ENCODE measurements at regions of chr4 and their contacts with region 1.

Region 1: DNA sequence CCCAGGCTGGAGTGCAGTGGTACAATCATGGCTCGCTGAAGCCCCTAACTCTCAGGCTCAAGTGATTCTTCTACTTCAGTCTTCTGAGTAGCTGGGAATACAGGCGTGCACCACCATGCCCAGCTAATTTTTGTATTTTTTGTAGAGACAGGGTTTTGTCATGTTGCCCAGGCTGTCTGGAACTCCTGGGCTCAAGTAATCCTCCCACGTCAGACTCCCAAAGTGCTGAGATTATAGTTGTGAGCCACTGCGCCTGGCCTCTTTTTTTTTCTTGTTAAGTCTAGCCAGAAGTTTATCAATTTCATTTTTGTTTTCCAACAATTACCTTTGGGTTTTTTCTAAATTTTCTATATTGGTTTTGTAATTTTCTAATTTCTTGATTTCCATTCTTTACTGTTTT is 100.6 kb downstream of the GC start:
- DNase-seq: no peak
- ATAC-seq: no peak
- H3K4me3 ChIP-seq: no peak overlapping the region
- H3K27ac ChIP-seq: peak overlapping the region in 1 of 12 donors; percentile 17
- H3K4me1 ChIP-seq: no peaks in the 10 kb centered on the region
- H3K27me3 ChIP-seq: no peaks in the 10 kb centered on the region
- CTCF ChIP-seq: no peak
- POLR2A ChIP-seq: no peak

Region 2: GRCh38 chr4:71663780-71664179 is 19.5 kb before region 1 on chr4:
- intact Hi-C with region 1: loop called in 1 of 10 experiments (anchors 1 kb)
- DNase-seq: no peak
- ATAC-seq: no peak
- H3K4me3 ChIP-seq: no peak overlapping the region
- H3K27ac ChIP-seq: no peak overlapping the region
- H3K4me1 ChIP-seq: no peaks in the 10 kb centered on the region
- H3K27me3 ChIP-seq: peaks cover 0 to 3% (median 0%) of the 10 kb centered on the region in 9 donors
- CTCF ChIP-seq: no peak
- POLR2A ChIP-seq: no peak

Region 3: GRCh38 chr4:71833232-71833900 is 150.1 kb after region 1 on chr4:
- intact Hi-C with region 1: no loop called
- DNase-seq: peak in 2 of 5 donors; percentile 24 to 35
- ATAC-seq: peak in 2 of 4 donors; percentile 27 to 70
- H3K4me3 ChIP-seq: no peak overlapping the region
- H3K27ac ChIP-seq: no peak overlapping the region
- H3K4me1 ChIP-seq: no peaks in the 10 kb centered on the region
- H3K27me3 ChIP-seq: no peaks in the 10 kb centered on the region
- CTCF ChIP-seq: no peak
- POLR2A ChIP-seq: no peak

Region 4: DNA sequence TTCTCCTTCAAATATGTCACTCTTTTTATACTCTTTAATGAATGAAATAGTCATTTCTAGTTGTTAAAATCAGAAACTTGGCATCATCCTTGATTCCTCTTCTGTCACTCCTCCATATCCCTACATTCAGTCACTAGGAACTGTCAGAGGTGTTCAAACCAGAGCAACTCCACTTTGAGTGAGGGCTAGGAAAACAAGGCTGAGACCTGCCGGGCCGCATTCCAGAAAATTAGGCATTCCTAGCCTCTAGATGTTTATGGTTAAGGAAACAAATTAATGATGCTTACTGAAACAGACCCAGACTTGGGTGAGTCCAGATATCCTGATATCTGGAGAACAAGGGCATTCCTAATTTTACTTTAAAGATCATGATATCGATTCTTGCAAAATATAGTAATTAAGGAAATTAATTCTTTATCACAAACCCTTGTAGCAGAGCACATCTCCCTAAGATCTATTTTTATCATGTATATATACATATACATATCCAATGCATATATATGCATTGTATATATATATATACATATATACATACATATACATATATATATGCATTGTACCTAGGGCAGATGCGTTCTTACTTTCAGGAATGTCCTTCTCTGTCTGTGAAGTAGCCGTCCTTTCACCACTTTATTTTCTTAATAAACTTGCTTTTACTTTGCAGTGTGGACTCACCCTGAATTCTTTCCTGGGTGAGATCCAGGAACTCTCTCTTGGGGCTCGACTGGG is 199.0 kb after region 1 on chr4:
- intact Hi-C with region 1: no loop called
- DNase-seq: no peak
- ATAC-seq: no peak
- H3K4me3 ChIP-seq: no peak overlapping the region
- H3K27ac ChIP-seq: no peak overlapping the region
- H3K4me1 ChIP-seq: no peaks in the 10 kb centered on the region
- H3K27me3 ChIP-seq: no peaks in the 10 kb centered on the region
- CTCF ChIP-seq: no peak
- POLR2A ChIP-seq: no peak

Measured in heart left ventricle (tissue), 16 donors.